GM12878 (cell line): ENCODE measurements at regions of chr9 and their contacts with region 1.

Region 1: DNA sequence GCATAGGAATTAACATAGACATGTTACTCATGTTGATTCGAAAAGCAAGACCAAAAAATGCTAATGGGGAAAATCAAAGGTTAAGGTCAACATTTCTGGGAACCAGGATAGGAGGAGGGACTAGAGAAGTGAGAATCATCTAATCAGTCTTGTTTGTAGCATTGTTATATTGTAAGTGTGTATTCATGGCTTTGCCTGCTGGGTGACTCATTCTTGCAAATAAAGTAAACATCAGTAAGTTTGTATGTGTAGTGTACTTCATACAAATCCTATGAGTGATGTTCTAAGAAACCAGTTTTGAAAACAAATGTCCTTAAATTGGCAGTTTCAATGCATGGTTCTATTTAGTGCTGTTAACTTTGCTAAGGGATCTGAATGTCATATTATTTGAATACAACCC is 79.0 kb upstream of the TMEM252 start:
- DNase-seq: no peak
- ATAC-seq: no peak
- H3K4me3 ChIP-seq: no peak overlapping the region
- H3K27ac ChIP-seq: no peak overlapping the region
- H3K4me1 ChIP-seq: no peaks in the 10 kb centered on the region
- H3K27me3 ChIP-seq: no peaks in the 10 kb centered on the region
- CTCF ChIP-seq: no peak
- EP300 ChIP-seq: no peak
- POLR2A ChIP-seq: no peak
- RAD21 ChIP-seq: no peak

Region 2: GRCh38 chr9:68552700-68553476 is 66.7 kb before region 1 on chr9:
- CTCF ChIA-PET with region 1: no interaction called
- POLR2A ChIA-PET with region 1: no interaction called
- RAD21 ChIA-PET with region 1: no interaction called
- SMC1A ChIA-PET with region 1: no interaction called
- in situ Hi-C with region 1: no loop called
- intact Hi-C with region 1: no loop called
- DNase-seq: no peak
- ATAC-seq: no peak
- H3K4me3 ChIP-seq: no peak overlapping the region
- H3K27ac ChIP-seq: no peak overlapping the region
- H3K4me1 ChIP-seq: peaks cover 4% of the 10 kb centered on the region
- H3K27me3 ChIP-seq: peaks cover 0 to 1% of the 10 kb centered on the region in 2 experiments; a peak in 2 of 4 replicates
- CTCF ChIP-seq: no peak
- EP300 ChIP-seq: no peak
- POLR2A ChIP-seq: no peak
- RAD21 ChIP-seq: no peak

Region 3: DNA sequence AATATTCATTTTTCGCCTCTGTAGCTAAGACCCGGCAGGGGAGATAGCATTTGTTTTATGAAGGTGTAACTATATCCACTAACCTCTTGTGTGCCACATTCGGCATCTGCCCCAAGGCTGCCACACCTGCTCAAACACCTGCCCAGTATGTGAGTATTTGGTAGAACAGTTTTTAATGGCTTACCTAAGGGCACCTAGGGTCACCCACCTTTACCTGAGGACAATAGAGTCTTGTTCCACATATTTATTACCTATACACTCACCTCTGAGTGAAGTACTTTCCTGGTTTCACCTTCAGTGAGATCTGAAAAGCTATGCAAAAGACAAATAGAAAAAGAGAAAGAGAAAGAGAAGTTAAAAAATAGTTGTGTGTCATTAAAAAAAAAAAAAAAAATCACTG is 17.4 kb after region 1 on chr9:
- CTCF ChIA-PET with region 1: interaction called, 4 read pairs
- POLR2A ChIA-PET with region 1: no interaction called
- RAD21 ChIA-PET with region 1: no interaction called
- SMC1A ChIA-PET with region 1: interaction called, 10 read pairs
- in situ Hi-C with region 1: no loop called
- intact Hi-C with region 1: no loop called
- DNase-seq: no peak
- ATAC-seq: no peak
- H3K4me3 ChIP-seq: no peak overlapping the region
- H3K27ac ChIP-seq: no peak overlapping the region
- H3K4me1 ChIP-seq: peaks cover 27% of the 10 kb centered on the region
- H3K27me3 ChIP-seq: no peaks in the 10 kb centered on the region
- CTCF ChIP-seq: no peak
- EP300 ChIP-seq: no peak
- POLR2A ChIP-seq: no peak
- RAD21 ChIP-seq: no peak

Region 4: GRCh38 chr9:68678430-68678829 is 58.8 kb after region 1 on chr9:
- CTCF ChIA-PET with region 1: no interaction called
- POLR2A ChIA-PET with region 1: no interaction called
- RAD21 ChIA-PET with region 1: no interaction called
- SMC1A ChIA-PET with region 1: no interaction called
- in situ Hi-C with region 1: no loop called
- intact Hi-C with region 1: no loop called
- DNase-seq: no peak
- ATAC-seq: peak; percentile 94
- H3K4me3 ChIP-seq: no peak overlapping the region
- H3K27ac ChIP-seq: no peak overlapping the region
- H3K4me1 ChIP-seq: no peaks in the 10 kb centered on the region
- H3K27me3 ChIP-seq: no peaks in the 10 kb centered on the region
- CTCF ChIP-seq: peak; percentile 42 to 58 (median 56)
- EP300 ChIP-seq: no peak
- POLR2A ChIP-seq: no peak
- RAD21 ChIP-seq: peak; percentile 57

Region 5: GRCh38 chr9:68769852-68770251 is 150.2 kb after region 1 on chr9:
- CTCF ChIA-PET with region 1: no interaction called
- POLR2A ChIA-PET with region 1: no interaction called
- RAD21 ChIA-PET with region 1: no interaction called
- SMC1A ChIA-PET with region 1: no interaction called
- in situ Hi-C with region 1: no loop called
- intact Hi-C with region 1: no loop called
- DNase-seq: no peak
- ATAC-seq: no peak
- H3K4me3 ChIP-seq: no peak overlapping the region
- H3K27ac ChIP-seq: no peak overlapping the region
- H3K4me1 ChIP-seq: no peaks in the 10 kb centered on the region
- H3K27me3 ChIP-seq: no peaks in the 10 kb centered on the region
- CTCF ChIP-seq: no peak
- EP300 ChIP-seq: no peak
- POLR2A ChIP-seq: no peak
- RAD21 ChIP-seq: no peak